ENCODE measurements at regions of chr5 and their contacts with region 1.

Region 1: DNA sequence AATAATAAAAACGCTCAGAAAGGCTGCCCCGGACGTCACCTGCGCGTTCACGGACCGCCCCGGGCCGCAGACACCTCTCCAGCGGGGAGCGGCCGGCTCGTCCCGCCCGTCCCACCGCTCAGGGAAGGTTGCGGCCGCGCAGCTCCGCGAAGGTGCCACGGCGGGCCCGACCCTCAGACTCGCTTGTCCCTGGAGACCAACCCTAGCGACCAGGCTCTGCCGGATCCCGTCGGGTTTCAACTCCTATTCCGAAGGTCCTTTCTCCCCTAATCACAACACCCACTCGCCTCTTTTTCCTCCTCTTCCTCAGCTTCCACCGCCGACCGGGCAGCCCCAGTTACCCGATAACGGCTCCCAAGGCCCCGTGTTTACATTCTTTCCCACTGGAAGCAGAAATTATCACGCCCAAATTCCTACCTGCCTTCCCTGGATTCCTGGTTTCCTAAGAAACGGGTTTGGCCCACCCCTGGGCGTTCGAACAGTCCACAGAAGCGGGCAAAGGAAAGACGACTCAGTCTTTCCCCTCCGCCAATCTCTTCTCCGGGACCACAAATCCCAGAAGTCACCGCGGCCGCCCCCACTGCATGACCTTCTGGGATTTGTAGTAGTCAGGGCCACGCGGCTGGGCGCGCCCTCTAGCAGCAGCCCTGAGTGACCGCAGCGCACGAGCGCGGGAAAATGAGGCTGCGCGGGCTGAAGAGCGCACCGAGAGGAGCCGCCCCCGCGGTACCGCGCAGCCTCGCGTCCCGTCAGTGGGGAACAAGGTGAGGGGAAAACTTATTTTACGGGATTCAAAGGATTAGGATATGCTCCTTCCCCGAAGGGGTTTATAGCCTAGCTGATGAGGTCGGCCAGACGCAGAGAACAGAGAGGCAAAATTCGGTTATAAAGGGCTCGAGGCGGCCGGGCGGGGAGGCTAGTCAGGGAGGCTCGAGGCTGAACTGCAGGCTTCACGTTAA is at the start of gene TTC33:
- DNase-seq: peak; percentile 89 to 98
- H3K4me3 ChIP-seq: peak within 1 kb of the TSS; percentile 83 to 95
- H3K27ac ChIP-seq: peak within 1 kb of the TSS; percentile 91 to 92
- H3K4me1 ChIP-seq: peaks cover 0 to 8% of the 10 kb centered on the region in 2 donors
- H3K27me3 ChIP-seq: no peaks in the 10 kb centered on the region
- CTCF ChIP-seq: peak; percentile 46 to 79 (median 76)
- total RNA-seq, gene TTC33: 7.0 TPM

Region 2: GRCh38 chr5:39399135-39400036 is 1356.3 kb before region 1 on chr5:
- intact Hi-C with region 1: loop called (anchors 10 kb)
- DNase-seq: peak; percentile 35 to 71
- H3K4me3 ChIP-seq: no peak overlapping the region
- H3K27ac ChIP-seq: peak overlapping the region; percentile 79 to 91
- H3K4me1 ChIP-seq: peaks cover 3 to 28% of the 10 kb centered on the region in 2 donors
- H3K27me3 ChIP-seq: no peaks in the 10 kb centered on the region
- CTCF ChIP-seq: no peak

Region 3: GRCh38 chr5:40688127-40688761 is 67.4 kb before region 1 on chr5:
- intact Hi-C with region 1: loop called (anchors 5 kb)
- DNase-seq: peak in 1 of 2 donors; percentile 91
- H3K4me3 ChIP-seq: no peak overlapping the region
- H3K27ac ChIP-seq: no peak overlapping the region
- H3K4me1 ChIP-seq: no peaks in the 10 kb centered on the region
- H3K27me3 ChIP-seq: no peaks in the 10 kb centered on the region
- CTCF ChIP-seq: peak; percentile 76 to 82 (median 81)

Region 4: GRCh38 chr5:40798012-40798855 is 42.5 kb after region 1 on chr5 and contains the start of gene PRKAA1:
- intact Hi-C with region 1: loop called (anchors 1 kb)
- DNase-seq: peak; percentile 67 to 96
- H3K4me3 ChIP-seq: peak within 1 kb of the TSS; percentile 98 to 99
- H3K27ac ChIP-seq: peak within 1 kb of the TSS; percentile 88 to 95
- H3K4me1 ChIP-seq: peaks cover 9 to 12% of the 10 kb centered on the region in 2 donors
- H3K27me3 ChIP-seq: no peaks in the 10 kb centered on the region
- CTCF ChIP-seq: peak; percentile 33 to 73 (median 54)
- total RNA-seq, gene PRKAA1: 90.3 TPM

Region 5: DNA sequence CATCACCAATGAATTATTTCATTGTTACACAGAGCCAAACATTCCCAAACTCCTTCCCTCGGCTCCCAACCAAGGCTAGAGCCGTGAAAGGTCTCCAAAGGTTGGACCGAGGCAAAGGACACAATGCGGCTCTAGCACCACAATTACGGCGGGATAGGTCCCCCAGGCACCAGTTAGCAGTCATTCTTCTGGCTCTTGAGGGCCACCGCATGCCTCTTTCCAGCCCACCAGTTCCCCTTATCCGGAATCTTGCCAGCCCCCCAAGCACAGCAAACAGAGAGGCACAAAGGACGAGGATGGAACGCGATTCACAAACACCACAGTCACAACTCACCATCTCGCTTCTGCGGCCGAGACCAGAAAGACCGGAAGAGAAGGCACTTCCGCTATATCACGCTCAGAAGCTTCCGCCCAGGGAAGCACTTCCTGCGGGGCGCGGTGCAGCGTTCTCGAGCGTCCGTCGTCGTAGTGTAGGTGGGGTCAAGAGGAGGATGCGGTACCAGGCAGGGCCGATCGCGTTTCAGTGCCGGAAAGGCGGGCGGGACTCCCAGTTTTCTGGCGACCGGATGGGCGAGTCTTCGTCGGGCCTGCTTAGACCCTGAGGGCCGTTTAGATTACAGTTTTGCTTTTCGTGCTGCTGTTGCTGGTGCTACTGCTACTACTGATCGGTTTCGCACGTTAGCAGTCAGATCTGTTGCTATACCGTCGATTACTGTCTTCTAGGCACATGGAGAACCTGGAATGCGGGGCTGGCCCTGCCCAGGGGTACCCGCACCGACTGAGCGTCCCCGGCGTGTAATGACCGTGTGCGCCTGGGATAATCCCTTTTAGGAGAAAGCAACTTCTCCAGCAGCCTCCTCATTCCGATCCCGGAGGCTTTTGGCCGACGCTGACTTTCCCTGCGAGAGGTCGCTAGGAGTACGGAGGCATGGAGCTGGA is 79.4 kb after region 1 on chr5 and contains the start of gene RPL37:
- intact Hi-C with region 1: loop called (anchors 1 kb)
- DNase-seq: peak; percentile 80 to 98
- H3K4me3 ChIP-seq: peak within 1 kb of the TSS; percentile 70 to 75
- H3K27ac ChIP-seq: peak within 1 kb of the TSS; percentile 94 to 99
- H3K4me1 ChIP-seq: peaks cover 4 to 15% of the 10 kb centered on the region in 2 donors
- H3K27me3 ChIP-seq: no peaks in the 10 kb centered on the region
- CTCF ChIP-seq: no peak
- total RNA-seq, gene RPL37: 22.1 TPM

Region 6: DNA sequence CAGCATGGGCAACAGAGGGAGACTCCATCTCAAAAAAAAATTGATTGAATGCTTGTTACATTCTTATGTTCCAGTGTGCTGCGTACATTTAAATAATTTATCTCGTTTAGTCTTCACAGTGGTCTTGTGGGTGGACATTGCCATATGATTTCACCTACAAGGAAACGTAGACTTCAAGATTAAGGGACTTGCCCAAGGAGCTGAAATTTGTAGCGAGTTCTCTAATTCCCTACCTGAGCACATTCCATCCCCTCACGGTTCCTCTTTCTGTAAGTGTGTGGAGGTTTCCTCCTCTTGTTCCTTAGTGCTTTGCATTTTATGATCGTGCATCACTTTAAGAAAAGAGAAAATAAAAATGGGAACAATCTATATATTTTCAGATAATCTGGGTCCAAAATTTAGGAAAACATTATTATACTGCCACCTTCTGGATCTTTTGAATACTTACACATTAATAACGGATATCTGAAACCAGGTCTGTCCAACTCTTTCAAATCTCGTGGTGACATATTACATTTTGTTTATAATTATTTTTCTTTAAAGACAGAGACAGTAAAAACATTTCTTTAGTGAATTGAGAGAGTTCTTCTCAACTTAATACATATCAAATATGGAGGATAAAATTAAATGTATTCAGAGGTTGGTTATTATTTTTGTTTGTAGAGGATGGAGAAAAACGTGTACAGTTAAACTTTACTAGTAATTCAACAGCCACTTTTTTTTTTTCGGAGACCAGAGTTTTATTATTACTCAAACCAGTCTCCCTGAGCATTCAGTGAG is 123.7 kb after region 1 on chr5:
- intact Hi-C with region 1: loop called (anchors 1 kb)
- DNase-seq: no peak
- H3K4me3 ChIP-seq: no peak overlapping the region
- H3K27ac ChIP-seq: no peak overlapping the region
- H3K4me1 ChIP-seq: no peaks in the 10 kb centered on the region
- H3K27me3 ChIP-seq: no peaks in the 10 kb centered on the region
- CTCF ChIP-seq: peak; percentile 21 to 56 (median 56)

Region 7: GRCh38 chr5:41903892-41904799 is 1148.5 kb after region 1 on chr5 and contains the start of gene RIMOC1:
- intact Hi-C with region 1: loop called (anchors 5 kb)
- DNase-seq: peak; percentile 98 to 100
- H3K4me3 ChIP-seq: peak within 1 kb of the TSS; percentile 75 to 79
- H3K27ac ChIP-seq: peak within 1 kb of the TSS; percentile 87 to 94
- H3K4me1 ChIP-seq: peaks cover 3 to 6% of the 10 kb centered on the region in 2 donors
- H3K27me3 ChIP-seq: no peaks in the 10 kb centered on the region
- CTCF ChIP-seq: no peak
- total RNA-seq, gene RIMOC1: 11.1 TPM

Measured in ascending aorta (tissue), 2 donors.